CD8-positive, alpha-beta T cell (primary cell): ENCODE measurements at regions of chr1 and their contacts with region 1.

Region 1: DNA sequence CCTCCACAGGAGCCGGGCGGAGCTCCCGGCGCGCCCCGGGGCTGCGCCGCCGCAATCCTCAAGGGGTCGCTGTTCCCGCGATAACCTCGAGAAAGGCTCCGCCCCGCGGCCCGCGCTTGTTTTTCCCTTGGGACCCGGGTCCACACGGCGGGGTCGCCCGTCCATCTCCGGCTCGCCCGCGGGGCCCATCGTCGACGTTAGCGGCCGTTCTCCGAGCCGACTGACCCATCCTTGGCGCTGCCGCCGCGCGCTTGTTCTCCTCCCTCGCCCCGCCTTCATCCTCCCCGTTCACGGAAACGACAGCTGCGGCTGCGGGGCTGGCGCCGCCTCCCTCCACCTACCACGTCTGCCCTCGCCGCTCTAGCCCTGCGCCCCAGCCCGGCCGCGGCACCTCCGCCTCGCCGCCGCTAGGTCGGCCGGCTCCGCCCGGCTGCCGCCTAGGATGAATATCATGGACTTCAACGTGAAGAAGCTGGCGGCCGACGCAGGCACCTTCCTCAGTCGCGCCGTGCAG is at the start of gene SH3GLB1:
- DNase-seq: peak; percentile 80 to 94 (median 90)
- ATAC-seq: peak; percentile 87
- H3K4me3 ChIP-seq: peak within 1 kb of the TSS; percentile 82 to 83
- H3K4me3 Mint-ChIP-seq: peak within 1 kb of the TSS; percentile 97
- H3K27ac ChIP-seq: peak within 1 kb of the TSS; percentile 81 to 92
- H3K27ac Mint-ChIP-seq: peak within 1 kb of the TSS; percentile 99
- H3K4me1 ChIP-seq: peaks cover 38% of the 10 kb centered on the region
- H3K4me1 Mint-ChIP-seq: peaks cover 57% of the 10 kb centered on the region
- H3K27me3 ChIP-seq: no peaks in the 10 kb centered on the region
- H3K27me3 Mint-ChIP-seq: no peaks in the 10 kb centered on the region
- CTCF ChIP-seq: peak; percentile 98
- total RNA-seq, gene SH3GLB1: 47.5 to 56.5 TPM

Region 2: GRCh38 chr1:85857991-85858390 is 846.5 kb before region 1 on chr1:
- CTCF ChIA-PET with region 1: no interaction called
- POLR2A ChIA-PET with region 1: no interaction called
- intact Hi-C with region 1: no loop called
- DNase-seq: no peak
- ATAC-seq: no peak
- H3K4me3 ChIP-seq: no peak overlapping the region
- H3K4me3 Mint-ChIP-seq: no peak overlapping the region
- H3K27ac ChIP-seq: no peak overlapping the region
- H3K27ac Mint-ChIP-seq: no peak overlapping the region
- H3K4me1 ChIP-seq: no peaks in the 10 kb centered on the region
- H3K4me1 Mint-ChIP-seq: no peaks in the 10 kb centered on the region
- H3K27me3 ChIP-seq: no peaks in the 10 kb centered on the region
- H3K27me3 Mint-ChIP-seq: no peaks in the 10 kb centered on the region
- CTCF ChIP-seq: no peak

Region 3: GRCh38 chr1:86395771-86396497 is 308.6 kb before region 1 on chr1 and contains the start of gene ODF2L:
- CTCF ChIA-PET with region 1: interaction called, 3 read pairs
- POLR2A ChIA-PET with region 1: interaction called, 11 read pairs
- intact Hi-C with region 1: loop called in 1 of 2 experiments (anchors 1 kb)
- DNase-seq: peak; percentile 74 to 91 (median 89)
- ATAC-seq: peak; percentile 98
- H3K4me3 ChIP-seq: peak within 1 kb of the TSS; percentile 91 to 97
- H3K4me3 Mint-ChIP-seq: peak within 1 kb of the TSS; percentile 99
- H3K27ac ChIP-seq: peak within 1 kb of the TSS; percentile 85 to 91
- H3K27ac Mint-ChIP-seq: peak within 1 kb of the TSS; percentile 97
- H3K4me1 ChIP-seq: peaks cover 16% of the 10 kb centered on the region
- H3K4me1 Mint-ChIP-seq: peaks cover 53% of the 10 kb centered on the region
- H3K27me3 ChIP-seq: no peaks in the 10 kb centered on the region
- H3K27me3 Mint-ChIP-seq: no peaks in the 10 kb centered on the region
- CTCF ChIP-seq: no peak
- total RNA-seq, gene ODF2L: 49.3 to 49.6 TPM

Region 4: GRCh38 chr1:86537928-86538695 is 166.4 kb before region 1 on chr1:
- CTCF ChIA-PET with region 1: no interaction called
- POLR2A ChIA-PET with region 1: no interaction called
- intact Hi-C with region 1: no loop called
- DNase-seq: no peak
- ATAC-seq: no peak
- H3K4me3 ChIP-seq: no peak overlapping the region
- H3K4me3 Mint-ChIP-seq: no peak overlapping the region
- H3K27ac ChIP-seq: no peak overlapping the region
- H3K27ac Mint-ChIP-seq: no peak overlapping the region
- H3K4me1 ChIP-seq: no peaks in the 10 kb centered on the region
- H3K4me1 Mint-ChIP-seq: no peaks in the 10 kb centered on the region
- H3K27me3 ChIP-seq: no peaks in the 10 kb centered on the region
- H3K27me3 Mint-ChIP-seq: peaks cover 28% of the 10 kb centered on the region
- CTCF ChIP-seq: no peak

Region 5: GRCh38 chr1:86733340-86733739 is 28.8 kb after region 1 on chr1:
- CTCF ChIA-PET with region 1: interaction called, 15 read pairs
- POLR2A ChIA-PET with region 1: interaction called, 9 read pairs
- intact Hi-C with region 1: no loop called
- DNase-seq: no peak
- ATAC-seq: no peak
- H3K4me3 ChIP-seq: no peak overlapping the region
- H3K4me3 Mint-ChIP-seq: no peak overlapping the region
- H3K27ac ChIP-seq: no peak overlapping the region
- H3K27ac Mint-ChIP-seq: peak overlapping the region; percentile 49
- H3K4me1 ChIP-seq: no peaks in the 10 kb centered on the region
- H3K4me1 Mint-ChIP-seq: peaks cover 4% of the 10 kb centered on the region
- H3K27me3 ChIP-seq: no peaks in the 10 kb centered on the region
- H3K27me3 Mint-ChIP-seq: no peaks in the 10 kb centered on the region
- CTCF ChIP-seq: no peak

Region 6: DNA sequence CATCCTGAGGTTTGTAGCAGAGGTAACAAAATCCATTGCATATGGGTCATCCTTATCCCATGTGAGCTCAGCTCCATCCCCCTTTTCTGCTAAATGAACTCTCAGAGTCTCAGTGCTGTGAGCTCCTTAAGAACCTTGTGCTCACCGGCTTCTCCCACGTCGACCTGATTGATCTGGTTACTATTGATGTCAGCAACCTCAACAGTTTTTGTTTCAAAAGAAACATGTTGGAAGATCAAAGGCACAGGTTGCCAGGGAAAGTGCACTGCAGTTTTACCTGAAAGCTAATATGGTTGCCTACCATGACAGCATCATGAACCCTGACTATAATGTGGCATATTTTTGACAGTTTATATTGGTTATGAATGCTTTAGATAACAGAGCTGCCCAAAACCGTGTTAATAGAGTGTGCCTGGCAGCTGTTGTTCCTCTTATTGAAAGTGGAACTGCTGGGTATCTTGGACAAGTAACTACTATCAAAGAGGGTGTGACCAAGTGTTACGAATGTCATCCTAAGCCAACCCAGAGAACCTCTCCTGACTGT is 341.3 kb after region 1 on chr1:
- CTCF ChIA-PET with region 1: no interaction called
- POLR2A ChIA-PET with region 1: no interaction called
- intact Hi-C with region 1: loop called in 1 of 2 experiments (anchors 10 kb)
- DNase-seq: peak in 7 of 9 experiments; percentile 1 to 85 (median 56)
- ATAC-seq: peak; percentile 65
- H3K4me3 ChIP-seq: no peak overlapping the region
- H3K4me3 Mint-ChIP-seq: peak overlapping the region; percentile 63
- H3K27ac ChIP-seq: peak overlapping the region in 1 of 2 experiments; percentile 43
- H3K27ac Mint-ChIP-seq: peak overlapping the region; percentile 91
- H3K4me1 ChIP-seq: peaks cover 21% of the 10 kb centered on the region
- H3K4me1 Mint-ChIP-seq: peaks cover 55% of the 10 kb centered on the region
- H3K27me3 ChIP-seq: no peaks in the 10 kb centered on the region
- H3K27me3 Mint-ChIP-seq: no peaks in the 10 kb centered on the region
- CTCF ChIP-seq: no peak

Region 7: DNA sequence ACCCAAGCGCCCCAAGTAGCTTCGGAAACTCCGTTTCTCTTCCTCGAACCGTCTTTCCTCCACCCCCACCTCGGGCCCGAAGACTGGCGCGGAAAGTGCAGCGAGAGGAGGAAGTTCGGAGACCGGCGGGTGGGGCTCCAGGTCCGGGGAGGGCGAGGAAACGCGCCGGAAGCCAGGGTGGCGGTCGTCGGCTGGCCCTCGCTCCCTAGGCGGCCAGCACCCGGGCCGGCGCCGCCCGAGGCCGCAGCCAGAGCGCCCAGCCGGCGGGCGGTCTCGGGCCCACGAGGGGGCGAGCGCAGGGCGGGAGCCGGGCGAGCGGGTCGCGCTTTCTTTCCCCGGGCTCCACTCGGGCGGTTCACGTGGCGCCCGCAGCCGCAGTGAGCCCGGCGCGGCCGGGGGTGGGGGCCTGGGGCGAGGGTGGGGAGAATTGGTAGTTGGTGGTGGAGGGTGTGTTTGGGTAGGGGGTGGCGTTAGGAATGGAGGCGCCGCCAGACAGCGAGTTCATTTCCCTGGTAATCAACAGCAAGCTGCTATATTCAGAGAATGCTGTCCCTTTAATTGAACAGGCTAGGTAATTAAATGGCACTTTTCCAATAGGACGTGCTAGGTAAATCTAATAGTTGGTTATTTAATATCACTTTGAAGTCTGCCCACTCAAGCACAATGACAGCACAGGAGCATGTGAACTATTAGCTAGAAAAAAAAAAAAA is 630.8 kb after region 1 on chr1:
- CTCF ChIA-PET with region 1: no interaction called
- POLR2A ChIA-PET with region 1: no interaction called
- intact Hi-C with region 1: loop called in 1 of 2 experiments (anchors 10 kb)
- DNase-seq: peak in 8 of 9 experiments; percentile 48 to 77 (median 64)
- ATAC-seq: peak; percentile 53
- H3K4me3 ChIP-seq: peak overlapping the region; percentile 53 to 60
- H3K4me3 Mint-ChIP-seq: peak overlapping the region; percentile 89
- H3K27ac ChIP-seq: peak overlapping the region; percentile 14 to 62
- H3K27ac Mint-ChIP-seq: peak overlapping the region; percentile 90
- H3K4me1 ChIP-seq: peaks cover 35% of the 10 kb centered on the region
- H3K4me1 Mint-ChIP-seq: peaks cover 56% of the 10 kb centered on the region
- H3K27me3 ChIP-seq: no peaks in the 10 kb centered on the region
- H3K27me3 Mint-ChIP-seq: no peaks in the 10 kb centered on the region
- CTCF ChIP-seq: no peak